ENCODE measurements at regions of chr1 and their contacts with region 1.

Region 1: DNA sequence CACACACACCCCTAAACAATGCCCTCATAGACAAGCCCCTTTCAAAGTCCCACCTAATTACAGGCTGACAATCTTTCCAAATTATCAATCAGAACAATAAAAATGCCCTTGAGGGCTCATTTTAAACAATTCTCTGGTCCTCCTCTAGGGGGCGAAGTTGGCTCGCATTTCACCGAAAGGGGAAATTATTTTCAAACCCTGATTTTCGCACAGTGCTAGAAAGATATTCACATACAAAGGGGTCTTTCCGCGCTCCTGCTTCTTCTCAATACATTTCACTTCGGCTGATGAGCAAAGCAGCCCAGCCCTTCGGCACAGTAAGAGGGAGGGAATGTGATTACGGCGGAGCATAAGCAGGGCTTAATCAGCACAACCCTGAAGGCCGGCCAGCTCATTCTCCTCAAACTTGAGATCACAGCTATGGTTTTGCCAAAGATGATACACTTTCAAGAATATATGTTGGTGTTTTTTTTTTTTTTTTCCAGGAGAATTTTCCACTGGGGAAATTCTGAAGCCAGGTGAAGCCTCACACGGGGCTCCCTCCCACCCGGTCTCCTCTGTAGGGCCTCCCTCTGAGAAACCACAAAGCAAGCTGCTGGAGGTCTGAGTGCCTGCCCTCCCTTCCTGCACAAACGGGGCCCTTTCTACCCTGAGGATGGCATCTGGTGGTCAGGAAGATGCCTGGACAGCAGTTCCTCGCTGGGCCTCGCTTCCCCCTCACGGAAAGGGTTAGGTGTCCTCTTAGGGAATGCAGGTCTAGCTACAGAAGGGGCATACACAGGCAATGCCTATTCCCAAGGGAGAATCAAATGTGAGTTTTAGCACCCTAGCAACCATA is 66.9 kb downstream of the GNG12 start:
- DNase-seq: peak; percentile 40 to 70 (median 69)
- H3K4me3 ChIP-seq: peak overlapping the region in 6 of 7 experiments; percentile 48 to 76 (median 61)
- H3K27ac ChIP-seq: no peak overlapping the region
- H3K4me1 ChIP-seq: peaks cover 2 to 15% (median 8%) of the 10 kb centered on the region in 4 experiments
- H3K27me3 ChIP-seq: peaks cover 0 to 2% (median 0%) of the 10 kb centered on the region in 5 experiments

Region 2: DNA sequence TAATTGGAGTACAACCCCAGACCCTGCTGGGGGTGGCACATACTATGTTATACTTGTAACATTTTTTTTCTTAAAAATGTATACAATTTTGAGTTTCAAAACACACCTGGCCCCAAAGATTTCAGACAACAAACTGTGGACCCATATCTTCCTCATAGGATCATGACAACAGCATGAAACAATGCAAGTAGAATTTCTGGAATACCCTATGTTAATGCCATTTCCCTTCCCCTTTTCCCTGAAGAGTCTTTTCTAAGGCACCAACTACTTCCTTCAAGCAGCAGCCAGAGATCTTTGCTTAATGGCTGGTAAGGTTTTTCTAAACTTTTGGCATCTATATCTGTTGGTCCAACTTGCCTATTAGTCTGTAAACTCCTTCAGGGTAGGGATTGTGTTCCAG is 236.3 kb before region 1 on chr1:
- CTCF ChIA-PET with region 1: interaction called, 291 read pairs
- POLR2A ChIA-PET with region 1: no interaction called
- DNase-seq: no peak
- H3K4me3 ChIP-seq: no peak overlapping the region
- H3K27ac ChIP-seq: no peak overlapping the region
- H3K4me1 ChIP-seq: peaks cover 0 to 5% (median under 1%) of the 10 kb centered on the region in 4 experiments
- H3K27me3 ChIP-seq: no peaks in the 10 kb centered on the region

Region 3: GRCh38 chr1:67535474-67535873 is 230.9 kb before region 1 on chr1:
- CTCF ChIA-PET with region 1: interaction called, 291 read pairs
- POLR2A ChIA-PET with region 1: no interaction called
- DNase-seq: peak; percentile 76 to 90 (median 86)
- H3K4me3 ChIP-seq: no peak overlapping the region
- H3K27ac ChIP-seq: no peak overlapping the region
- H3K4me1 ChIP-seq: peaks cover 0 to 4% (median 0%) of the 10 kb centered on the region in 4 experiments
- H3K27me3 ChIP-seq: no peaks in the 10 kb centered on the region

Region 4: GRCh38 chr1:67561704-67562113 is 204.7 kb before region 1 on chr1:
- CTCF ChIA-PET with region 1: interaction called, 148 read pairs
- POLR2A ChIA-PET with region 1: no interaction called
- DNase-seq: peak; percentile 77 to 85 (median 83)
- H3K4me3 ChIP-seq: no peak overlapping the region
- H3K27ac ChIP-seq: no peak overlapping the region
- H3K4me1 ChIP-seq: peaks cover 0 to 32% (median 22%) of the 10 kb centered on the region in 4 experiments
- H3K27me3 ChIP-seq: no peaks in the 10 kb centered on the region

Region 5: DNA sequence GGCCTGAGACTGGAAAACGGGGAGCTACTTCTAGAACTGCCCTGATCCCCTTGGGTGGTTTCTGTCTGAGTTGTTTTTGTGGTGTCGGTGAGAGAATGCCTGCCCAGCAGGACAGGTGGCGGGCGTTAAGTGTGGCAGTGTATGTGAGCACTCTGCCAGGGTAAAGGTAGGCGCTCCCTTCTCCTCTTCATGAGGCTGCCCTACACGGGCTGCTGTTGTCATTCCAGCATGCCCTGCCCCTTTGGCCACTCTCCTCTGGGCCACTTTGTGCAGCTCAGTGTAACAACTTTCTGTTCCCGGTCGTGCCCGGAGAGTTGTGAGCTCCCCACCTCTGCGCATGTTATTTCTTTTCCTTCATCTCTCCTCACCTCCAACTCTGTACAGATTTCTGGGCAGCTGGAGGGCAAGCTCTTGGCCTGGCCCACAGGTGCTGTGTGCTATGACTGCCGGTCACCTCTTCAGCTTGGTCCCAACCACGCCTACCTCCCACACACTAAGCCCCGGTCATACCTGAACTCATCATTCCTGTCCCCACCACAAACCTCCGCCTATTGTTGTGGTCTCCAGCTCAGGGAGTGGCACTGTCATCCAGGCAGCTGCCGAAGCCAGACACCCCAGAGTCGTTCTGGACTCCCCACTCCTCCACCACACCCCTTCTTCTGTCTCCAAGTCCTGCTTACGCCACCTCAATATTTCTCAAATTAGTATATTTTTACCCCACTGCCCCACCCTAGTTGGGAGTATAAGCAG is 12.4 kb before region 1 on chr1:
- CTCF ChIA-PET with region 1: interaction called, 16 read pairs
- POLR2A ChIA-PET with region 1: no interaction called
- DNase-seq: no peak
- H3K4me3 ChIP-seq: peak overlapping the region in 1 of 7 experiments; percentile 37
- H3K27ac ChIP-seq: no peak overlapping the region
- H3K4me1 ChIP-seq: peaks cover 2 to 32% (median 26%) of the 10 kb centered on the region in 4 experiments
- H3K27me3 ChIP-seq: no peaks in the 10 kb centered on the region

Region 6: DNA sequence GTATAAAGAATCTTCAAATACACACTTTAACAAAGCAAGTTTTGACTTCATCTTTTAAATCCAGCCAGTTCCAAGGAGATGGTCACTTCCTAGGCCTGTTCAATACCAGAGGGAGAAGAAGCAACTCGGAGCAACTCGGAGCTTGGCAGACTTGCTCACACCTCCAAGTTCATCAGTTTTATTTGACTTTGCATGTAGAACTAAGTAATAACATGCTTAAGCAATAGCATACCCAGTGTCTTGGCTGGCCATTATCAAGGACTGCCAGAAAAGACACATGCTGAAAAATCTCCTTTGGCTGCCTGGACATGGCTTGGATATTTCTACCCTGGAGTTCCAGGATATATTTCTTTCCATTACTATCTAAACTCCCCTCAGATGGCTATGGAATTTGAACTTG is 14.3 kb after region 1 on chr1:
- CTCF ChIA-PET with region 1: interaction called, 15 read pairs
- POLR2A ChIA-PET with region 1: no interaction called
- DNase-seq: no peak
- H3K4me3 ChIP-seq: no peak overlapping the region
- H3K27ac ChIP-seq: no peak overlapping the region
- H3K4me1 ChIP-seq: no peaks in the 10 kb centered on the region
- H3K27me3 ChIP-seq: no peaks in the 10 kb centered on the region

Region 7: GRCh38 chr1:67850151-67850551 is 83.8 kb after region 1 on chr1:
- CTCF ChIA-PET with region 1: interaction called, 14 read pairs
- POLR2A ChIA-PET with region 1: interaction called, 3 read pairs
- DNase-seq: peak in 2 of 3 donors; percentile 39 to 52
- H3K4me3 ChIP-seq: no peak overlapping the region
- H3K27ac ChIP-seq: no peak overlapping the region
- H3K4me1 ChIP-seq: no peaks in the 10 kb centered on the region
- H3K27me3 ChIP-seq: no peaks in the 10 kb centered on the region

Measured in common myeloid progenitor, CD34-positive (primary cell).